ENCODE measurements at regions of chr1 and their contacts with region 1.

Region 1: DNA sequence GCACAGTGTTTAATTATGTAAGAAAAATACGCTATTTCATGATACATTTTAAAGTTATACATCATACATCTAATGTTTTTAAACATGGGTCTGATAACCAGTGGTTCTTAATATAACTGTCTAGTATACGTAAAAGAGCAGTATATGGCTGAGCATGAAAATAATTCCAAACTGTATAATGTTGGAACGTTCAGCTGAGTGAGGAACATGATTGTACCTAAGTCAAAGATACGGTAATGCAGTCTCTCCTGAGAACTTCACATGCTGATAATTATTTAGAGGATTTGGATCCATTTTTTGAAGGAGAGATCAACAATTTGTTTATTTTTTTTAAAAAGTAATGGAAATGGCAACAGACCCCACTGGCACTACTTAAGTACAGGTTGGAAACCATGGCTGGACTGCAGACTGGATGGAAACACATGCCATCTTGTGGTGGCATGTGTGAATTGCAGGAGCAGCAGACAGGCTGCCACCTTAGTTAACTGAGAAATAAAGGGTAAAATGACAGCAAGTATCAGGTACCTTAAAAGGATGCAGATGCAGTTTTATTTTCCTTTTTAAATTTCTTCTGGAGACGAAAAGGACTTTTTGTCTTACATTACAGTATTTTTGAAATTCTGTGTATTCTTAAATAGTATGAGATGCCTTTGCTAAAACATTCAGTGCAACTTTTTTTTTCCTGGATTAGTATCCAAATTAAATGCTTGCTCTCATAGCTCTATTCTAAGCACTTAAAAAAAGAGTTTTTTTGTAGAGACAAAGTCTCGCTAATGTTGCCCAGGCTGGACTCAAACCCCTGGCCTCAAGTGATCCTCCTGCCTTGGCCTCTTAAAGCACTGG is 73.8 kb downstream of the MTR start:
- DNase-seq: no peak
- ATAC-seq: no peak
- H3K4me3 ChIP-seq: no peak overlapping the region
- H3K27ac ChIP-seq: peak overlapping the region in 1 of 10 donors; percentile 86
- H3K4me1 ChIP-seq: peaks cover 0 to 46% (median 18%) of the 10 kb centered on the region in 9 donors
- H3K27me3 ChIP-seq: no peaks in the 10 kb centered on the region
- CTCF ChIP-seq: peak; percentile 69 to 96 (median 81)

Region 2: DNA sequence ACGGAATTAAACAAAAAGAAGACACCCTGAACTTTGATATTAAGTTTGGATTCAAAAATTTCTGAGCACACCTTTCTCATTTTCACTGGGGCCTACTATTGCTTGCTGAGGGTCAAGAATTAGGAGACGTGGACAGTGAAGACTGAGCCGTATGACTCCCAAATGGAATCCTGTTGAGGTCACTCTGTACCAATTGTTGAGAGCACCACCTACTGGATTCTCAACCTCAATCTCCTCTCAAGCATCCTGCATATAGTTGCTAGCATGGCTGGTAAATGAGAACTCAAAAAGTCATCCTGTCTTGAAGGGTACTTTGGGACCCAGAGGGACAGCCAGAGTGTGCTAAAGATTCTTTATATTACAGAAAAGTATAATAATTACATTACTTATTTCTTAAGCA is 93.9 kb before region 1 on chr1:
- intact Hi-C with region 1: loop called in 1 of 10 experiments (anchors 5 kb)
- DNase-seq: peak in 1 of 2 donors; percentile 16
- ATAC-seq: peak in 7 of 8 donors; percentile 41 to 74 (median 70)
- H3K4me3 ChIP-seq: no peak overlapping the region
- H3K27ac ChIP-seq: no peak overlapping the region
- H3K4me1 ChIP-seq: no peaks in the 10 kb centered on the region
- H3K27me3 ChIP-seq: peaks cover 0 to 4% (median 0%) of the 10 kb centered on the region in 7 donors
- CTCF ChIP-seq: peak in 8 of 9 donors; percentile 20 to 56 (median 38)

Region 3: GRCh38 chr1:236795035-236795756 is 73.7 kb before region 1 on chr1 and contains the start of gene MTR:
- intact Hi-C with region 1: loop called in 1 of 10 experiments (anchors 10 kb)
- DNase-seq: peak; percentile 97 to 99
- ATAC-seq: peak; percentile 98 to 99 (median 99)
- H3K4me3 ChIP-seq: peak within 1 kb of the TSS; percentile 65 to 98 (median 89)
- H3K27ac ChIP-seq: peak within 1 kb of the TSS; percentile 85 to 97 (median 94)
- H3K4me1 ChIP-seq: peaks cover 0 to 45% (median 35%) of the 10 kb centered on the region in 9 donors
- H3K27me3 ChIP-seq: peaks cover 0 to 5% (median 0%) of the 10 kb centered on the region in 7 donors
- CTCF ChIP-seq: no peak
- total RNA-seq, gene MTR: 39.4 to 100 (median 71.6) TPM

Region 4: DNA sequence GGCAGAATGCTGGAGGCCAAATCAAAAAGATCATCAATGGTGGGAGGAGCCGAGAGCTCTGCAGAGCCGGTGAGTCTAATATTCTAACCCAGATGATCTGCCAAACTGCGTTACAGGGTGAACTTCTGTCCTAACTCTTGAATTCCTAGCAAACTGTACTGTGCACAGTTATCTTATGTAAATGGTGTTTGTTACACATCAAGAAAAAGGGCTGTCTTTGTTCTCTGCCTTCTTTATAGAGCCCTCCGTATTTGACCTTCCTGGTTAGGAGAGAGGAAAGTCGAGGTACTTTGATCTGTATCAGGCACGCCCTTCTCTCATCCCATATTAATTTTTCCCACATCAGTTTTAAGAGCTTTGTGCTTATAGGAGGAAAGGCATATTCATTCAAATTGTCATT is 97.8 kb after region 1 on chr1:
- intact Hi-C with region 1: no loop called
- DNase-seq: no peak
- ATAC-seq: no peak
- H3K4me3 ChIP-seq: no peak overlapping the region
- H3K27ac ChIP-seq: no peak overlapping the region
- H3K4me1 ChIP-seq: no peaks in the 10 kb centered on the region
- H3K27me3 ChIP-seq: no peaks in the 10 kb centered on the region
- CTCF ChIP-seq: no peak